Stomach (tissue), 19 donors: ENCODE measurements at regions of chr19 and their contacts with region 1.

Region 1: GRCh38 chr19:47406711-47407416 is 12.5 kb downstream of the MEIS3 start:
- DNase-seq: peak in 1 of 2 donors; percentile 69
- H3K4me3 ChIP-seq: no peak overlapping the region
- H3K27ac ChIP-seq: no peak overlapping the region
- H3K4me1 ChIP-seq: no peaks in the 10 kb centered on the region
- H3K27me3 ChIP-seq: peaks cover 0 to 79% (median 25%) of the 10 kb centered on the region in 3 donors
- CTCF ChIP-seq: no peak
- EP300 ChIP-seq: no peak
- POLR2A ChIP-seq: no peak

Region 2: DNA sequence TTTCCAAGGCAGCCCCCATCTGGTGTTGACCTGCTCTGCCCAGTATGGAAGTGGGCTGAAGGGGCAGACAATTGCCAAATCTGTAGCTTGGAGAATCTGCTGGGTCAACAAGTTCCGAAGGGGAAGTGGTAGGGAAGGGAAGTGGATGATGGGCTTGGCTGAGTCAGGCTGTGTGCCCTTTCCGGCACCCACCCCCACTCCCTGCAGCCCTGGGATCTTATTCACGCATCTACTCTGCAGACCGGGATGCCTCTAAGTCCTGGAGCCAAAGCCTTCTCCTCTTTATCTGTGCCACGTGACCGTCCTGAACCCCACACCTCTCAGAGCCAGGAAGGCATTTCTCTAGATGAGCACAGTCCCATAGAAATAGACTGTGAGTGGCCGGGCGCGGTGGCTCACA is 82.4 kb before region 1 on chr19:
- intact Hi-C with region 1: loop called (anchors 10 kb)
- DNase-seq: peak in 1 of 2 donors; percentile 26
- H3K4me3 ChIP-seq: no peak overlapping the region
- H3K27ac ChIP-seq: peak overlapping the region in 3 of 5 donors; percentile 29 to 65 (median 50)
- H3K4me1 ChIP-seq: no peaks in the 10 kb centered on the region
- H3K27me3 ChIP-seq: peaks cover 0 to 48% (median 0%) of the 10 kb centered on the region in 3 donors
- CTCF ChIP-seq: no peak
- EP300 ChIP-seq: no peak
- POLR2A ChIP-seq: no peak